ENCODE measurements at regions of chr1 and their contacts with region 1.

Region 1: GRCh38 chr1:41222496-41222895 is 19.6 kb downstream of the SCMH1 start:
- DNase-seq: no peak
- ATAC-seq: no peak
- H3K4me3 ChIP-seq: no peak overlapping the region
- H3K4me3 Mint-ChIP-seq: no peak overlapping the region
- H3K27ac ChIP-seq: no peak overlapping the region
- H3K27ac Mint-ChIP-seq: no peak overlapping the region
- H3K4me1 ChIP-seq: no peaks in the 10 kb centered on the region
- H3K4me1 Mint-ChIP-seq: peaks cover 20% of the 10 kb centered on the region
- H3K27me3 ChIP-seq: no peaks in the 10 kb centered on the region
- H3K27me3 Mint-ChIP-seq: no peaks in the 10 kb centered on the region
- CTCF ChIP-seq: no peak

Region 2: GRCh38 chr1:41245659-41246058 is 23.2 kb after region 1 on chr1:
- CTCF ChIA-PET with region 1: interaction called, 3 read pairs
- POLR2A ChIA-PET with region 1: no interaction called
- intact Hi-C with region 1: loop called in 1 of 2 experiments (anchors 2 kb)
- DNase-seq: no peak
- ATAC-seq: no peak
- H3K4me3 ChIP-seq: no peak overlapping the region
- H3K4me3 Mint-ChIP-seq: no peak overlapping the region
- H3K27ac ChIP-seq: no peak overlapping the region
- H3K27ac Mint-ChIP-seq: no peak overlapping the region
- H3K4me1 ChIP-seq: peaks cover 10% of the 10 kb centered on the region
- H3K4me1 Mint-ChIP-seq: peaks cover 10% of the 10 kb centered on the region
- H3K27me3 ChIP-seq: no peaks in the 10 kb centered on the region
- H3K27me3 Mint-ChIP-seq: peaks cover 2% of the 10 kb centered on the region
- CTCF ChIP-seq: no peak

Region 3: GRCh38 chr1:41294216-41294615 is 71.7 kb after region 1 on chr1:
- CTCF ChIA-PET with region 1: no interaction called
- POLR2A ChIA-PET with region 1: no interaction called
- intact Hi-C with region 1: loop called in 1 of 2 experiments (anchors 2 kb)
- DNase-seq: no peak
- ATAC-seq: no peak
- H3K4me3 ChIP-seq: no peak overlapping the region
- H3K4me3 Mint-ChIP-seq: no peak overlapping the region
- H3K27ac ChIP-seq: no peak overlapping the region
- H3K27ac Mint-ChIP-seq: no peak overlapping the region
- H3K4me1 ChIP-seq: no peaks in the 10 kb centered on the region
- H3K4me1 Mint-ChIP-seq: no peaks in the 10 kb centered on the region
- H3K27me3 ChIP-seq: no peaks in the 10 kb centered on the region
- H3K27me3 Mint-ChIP-seq: peaks cover 21% of the 10 kb centered on the region
- CTCF ChIP-seq: no peak